Head of caudate nucleus (tissue), 42 donors: ENCODE measurements at regions of chr19 and their contacts with region 1.

Region 1: DNA sequence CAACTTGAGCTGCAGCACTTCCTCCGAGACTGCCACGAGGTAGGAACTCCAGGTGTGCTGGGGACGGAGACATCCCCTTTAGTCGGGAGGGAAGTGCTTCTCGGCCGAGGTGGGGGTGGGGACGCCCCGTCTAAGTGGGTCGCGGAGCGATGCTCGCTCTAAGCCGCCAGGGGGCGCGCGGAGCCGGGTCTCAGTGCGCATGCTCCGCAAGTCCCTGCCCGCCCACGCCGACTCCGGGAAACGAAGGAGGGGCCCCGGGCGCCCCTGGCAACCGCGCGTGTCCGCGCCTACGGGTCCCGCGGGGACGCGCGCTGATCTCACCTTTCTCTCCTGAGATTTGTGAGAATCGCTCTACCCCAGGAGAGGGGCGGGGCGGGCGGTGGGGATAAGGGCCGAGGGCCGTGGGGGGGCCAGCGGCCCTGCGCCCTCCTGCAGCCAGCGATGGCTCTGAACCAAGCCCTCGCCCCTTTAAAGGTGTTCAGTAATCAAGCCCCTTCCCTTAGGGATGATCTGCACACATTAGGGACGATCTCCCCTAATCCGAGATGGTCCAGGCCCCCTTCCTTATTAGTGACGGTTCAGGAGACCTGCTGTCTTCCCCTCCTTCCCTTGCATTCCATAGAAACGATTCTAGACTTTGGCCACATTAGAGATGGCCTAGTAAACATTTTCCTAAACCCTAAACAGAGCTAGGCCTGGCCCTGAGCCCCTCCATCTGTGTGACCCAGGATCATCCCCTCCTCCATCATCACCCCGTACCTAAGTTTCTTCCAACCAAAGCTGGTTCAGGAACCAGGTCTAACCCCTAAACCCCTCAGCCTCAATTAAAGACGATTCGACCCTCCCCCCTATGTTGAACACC is 47.3 kb upstream of the SHKBP1 start:
- DNase-seq: peak; percentile 65 to 95 (median 88)

Region 2: GRCh38 chr19:40465557-40466150 is 63.7 kb before region 1 on chr19 and contains the start of gene BLVRB:
- intact Hi-C with region 1: loop called (anchors 5 kb)
- DNase-seq: peak; percentile 99 to 100 (median 100)

Region 3: DNA sequence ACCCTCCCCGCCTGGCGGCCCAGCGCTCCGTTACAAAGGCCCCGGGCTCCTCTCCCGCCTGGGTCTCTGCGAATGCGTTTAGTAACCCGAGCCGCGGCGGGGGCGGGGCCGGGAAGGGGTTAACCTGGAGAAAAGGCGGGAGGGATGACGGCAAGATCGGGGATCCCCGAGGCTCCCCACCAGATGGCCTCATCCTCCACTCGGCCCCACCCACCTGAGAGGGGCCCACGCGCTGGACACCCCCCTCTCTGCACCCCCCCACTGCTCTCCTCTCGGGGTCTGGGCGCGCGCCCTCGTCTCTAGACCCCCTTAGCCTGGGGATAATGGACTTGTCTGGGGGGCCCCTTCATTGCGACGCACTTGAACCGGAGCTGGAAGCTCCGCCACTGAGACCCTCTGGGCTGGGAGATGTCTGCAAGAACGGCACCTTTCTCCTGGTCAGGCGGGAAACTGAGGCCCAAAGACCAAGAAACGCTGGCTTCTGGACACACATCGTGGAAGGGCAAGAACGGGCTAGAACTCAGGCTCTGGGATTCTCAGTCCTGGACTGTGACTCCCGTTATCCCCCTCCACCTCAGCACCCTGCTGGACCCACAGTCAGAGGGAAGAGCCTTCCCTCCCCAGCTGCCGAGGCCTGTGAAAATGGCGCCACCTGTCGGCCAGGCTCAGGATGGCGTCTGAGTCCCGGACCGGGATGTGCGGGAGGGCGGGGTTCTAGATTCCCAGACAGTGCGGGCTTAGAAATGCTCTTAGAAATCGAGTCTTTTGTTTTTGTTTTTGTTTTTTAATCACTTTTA is 69.0 kb after region 1 on chr19:
- intact Hi-C with region 1: loop called (anchors 1 kb)
- DNase-seq: peak; percentile 81 to 97 (median 91)